GM10248 (cell line): ENCODE measurements at regions of chr1 and their contacts with region 1.

Region 1: DNA sequence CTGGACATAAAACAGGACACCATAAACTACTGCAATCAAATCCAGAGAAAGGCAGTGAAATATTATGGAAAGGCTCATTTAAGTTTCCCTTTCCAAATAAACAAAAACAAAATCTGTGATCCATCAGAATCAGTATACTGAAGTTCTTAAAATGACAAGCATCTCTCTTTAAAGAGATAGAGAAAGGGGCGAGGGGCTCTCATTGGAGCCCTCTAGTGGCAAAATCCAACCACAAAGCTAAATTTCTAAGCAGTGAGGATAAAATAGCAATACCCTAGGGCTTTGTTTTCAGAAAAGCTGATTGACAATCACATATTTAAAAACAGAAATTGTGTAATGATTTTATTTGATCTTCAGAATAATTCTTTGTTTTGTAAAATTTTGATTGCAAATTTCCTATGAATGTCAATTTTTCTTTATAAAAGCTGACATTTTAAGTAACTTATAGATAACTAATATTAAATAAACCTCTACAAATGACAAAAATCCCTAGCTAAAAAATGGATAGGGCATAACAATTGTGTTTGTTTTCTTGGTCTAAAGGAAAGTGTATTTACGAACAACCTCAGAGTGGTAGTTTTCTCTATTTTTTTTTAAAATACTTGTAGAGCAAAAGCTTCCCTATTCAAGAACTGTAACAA is 138.2 kb downstream of the COL24A1 start:
- DNase-seq: peak; percentile 30
- CTCF ChIP-seq: peak; percentile 65

Region 2: DNA sequence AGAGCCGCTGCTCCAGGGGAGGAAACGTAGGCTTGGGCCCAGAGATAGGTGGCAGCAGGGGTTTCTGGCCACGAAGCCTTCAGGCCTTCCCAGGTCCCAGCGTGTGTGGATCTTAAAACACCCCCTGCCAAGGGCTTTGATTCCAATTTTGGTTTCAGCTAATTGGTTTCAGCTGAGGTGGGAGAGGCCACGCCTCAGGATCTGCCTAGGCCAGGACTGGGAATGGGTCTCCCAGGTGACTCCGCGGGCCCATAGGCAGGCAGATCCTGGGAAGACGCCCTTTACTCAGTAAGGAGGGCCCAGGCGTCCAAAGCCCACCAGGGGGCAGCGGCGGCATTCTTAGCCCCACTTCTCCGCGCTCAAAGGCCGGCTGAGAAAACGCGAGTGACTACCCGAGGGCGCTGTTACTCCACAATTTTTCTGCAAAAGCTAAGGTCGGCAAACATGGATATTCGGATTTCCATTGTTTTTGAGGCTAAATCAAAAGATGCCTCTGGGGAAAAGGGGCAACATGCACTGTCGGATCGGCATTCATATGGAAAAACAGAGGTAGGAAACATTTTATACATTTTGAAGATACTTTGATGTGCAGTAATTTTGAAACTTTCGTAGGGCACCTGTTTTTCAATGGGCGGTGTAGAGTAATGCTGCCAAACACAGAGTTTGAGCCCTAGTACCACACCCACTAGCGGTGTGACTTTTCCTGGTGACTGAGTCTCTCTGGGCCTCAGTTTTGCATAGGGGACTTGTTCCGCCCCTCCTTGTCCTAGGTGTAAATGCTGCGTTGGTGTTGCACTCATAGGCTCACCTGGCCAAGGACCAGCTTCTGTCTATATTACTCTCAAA is 710.2 kb before region 1 on chr1:
- CTCF ChIA-PET with region 1: interaction called, 12 read pairs
- POLR2A ChIA-PET with region 1: no interaction called
- DNase-seq: peak; percentile 66
- CTCF ChIP-seq: peak; percentile 87

Region 3: DNA sequence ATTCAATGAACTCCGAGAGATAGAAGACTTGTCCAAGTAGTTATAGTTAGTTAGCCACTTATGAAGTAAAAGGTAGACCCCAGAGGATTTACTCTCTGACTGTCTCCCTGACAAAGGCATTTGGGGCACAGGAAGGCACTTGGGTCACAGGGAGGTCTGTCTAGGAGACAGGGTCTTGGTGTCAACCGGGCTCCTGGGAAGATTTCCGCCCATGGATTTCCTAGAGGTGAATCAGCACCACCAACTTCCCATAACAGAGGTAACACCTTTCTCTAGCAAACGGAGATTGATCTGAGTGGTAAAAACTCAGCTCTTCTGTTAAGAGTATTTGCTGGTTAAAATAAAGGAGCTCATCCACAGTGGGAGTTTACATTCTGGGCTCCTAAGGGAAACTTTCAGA is 421.5 kb before region 1 on chr1:
- CTCF ChIA-PET with region 1: no interaction called
- POLR2A ChIA-PET with region 1: no interaction called
- DNase-seq: no peak
- CTCF ChIP-seq: no peak

Region 4: GRCh38 chr1:85756864-85757263 is 261.5 kb before region 1 on chr1:
- CTCF ChIA-PET with region 1: no interaction called
- POLR2A ChIA-PET with region 1: no interaction called
- DNase-seq: no peak
- CTCF ChIP-seq: no peak

Region 5: GRCh38 chr1:85894651-85895050 is 123.8 kb before region 1 on chr1:
- CTCF ChIA-PET with region 1: interaction called, 29 read pairs
- POLR2A ChIA-PET with region 1: no interaction called
- DNase-seq: peak; percentile 49
- CTCF ChIP-seq: peak; percentile 70

Region 6: GRCh38 chr1:85991261-85991660 is 27.1 kb before region 1 on chr1:
- CTCF ChIA-PET with region 1: interaction called, 13 read pairs
- POLR2A ChIA-PET with region 1: no interaction called
- DNase-seq: no peak
- CTCF ChIP-seq: no peak

Region 7: GRCh38 chr1:85998105-85998855 is 20.1 kb before region 1 on chr1:
- CTCF ChIA-PET with region 1: interaction called, 23 read pairs
- POLR2A ChIA-PET with region 1: no interaction called
- DNase-seq: no peak
- CTCF ChIP-seq: no peak

Region 8: DNA sequence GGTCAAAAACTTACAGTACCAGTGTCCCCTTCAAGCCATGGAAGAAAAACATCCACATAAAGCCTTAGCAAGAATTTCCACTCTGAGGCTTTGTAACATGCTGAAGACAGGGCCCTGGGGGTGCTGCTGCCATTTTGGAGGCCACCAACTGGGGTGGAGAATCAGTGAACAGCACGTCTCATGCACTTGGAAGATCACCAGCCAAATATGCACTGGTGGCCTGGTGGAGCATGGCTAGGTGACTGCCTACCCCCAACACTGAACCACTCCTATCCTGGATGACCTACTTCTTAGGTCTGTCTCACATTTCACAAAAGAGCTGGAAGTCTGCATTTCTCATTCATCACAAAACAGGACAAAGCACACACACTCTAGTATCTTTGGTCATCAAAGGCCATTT is 11.8 kb after region 1 on chr1:
- CTCF ChIA-PET with region 1: interaction called, 38 read pairs
- POLR2A ChIA-PET with region 1: no interaction called
- DNase-seq: no peak
- CTCF ChIP-seq: no peak